Activated CD4-positive, alpha-beta T cell treated with anti-CD3 and anti-CD28 coated beads, Interleukin-2, amount 10 ng/mL, durations not matched to agents 24 days and 14 days (primary cell): ENCODE measurements at regions of chr3 and their contacts with region 1.

Region 1: DNA sequence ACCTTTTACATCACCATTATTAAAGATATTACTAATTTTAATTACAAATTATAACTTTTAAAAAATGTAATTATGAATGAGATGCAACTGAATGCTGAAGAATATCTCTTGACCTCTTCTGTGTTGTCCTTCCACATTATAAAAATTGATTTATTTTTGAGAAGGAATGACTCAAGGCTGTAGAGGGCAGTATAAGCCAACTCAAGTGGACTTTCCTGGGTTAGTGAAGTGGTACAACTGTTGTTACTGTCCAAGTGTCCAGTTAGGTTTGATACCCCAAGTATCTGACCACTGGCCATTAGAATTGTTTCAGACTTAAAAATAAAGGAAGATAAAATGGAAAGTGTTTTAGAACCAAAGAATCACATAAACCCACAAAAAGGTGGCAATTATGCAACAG is 51.9 kb downstream of the BBX start:
- DNase-seq: peak; percentile 65
- H3K4me3 Mint-ChIP-seq: no peak overlapping the region
- H3K27ac Mint-ChIP-seq: no peak overlapping the region
- H3K4me1 Mint-ChIP-seq: peaks cover 14% of the 10 kb centered on the region
- H3K27me3 Mint-ChIP-seq: no peaks in the 10 kb centered on the region

Region 2: DNA sequence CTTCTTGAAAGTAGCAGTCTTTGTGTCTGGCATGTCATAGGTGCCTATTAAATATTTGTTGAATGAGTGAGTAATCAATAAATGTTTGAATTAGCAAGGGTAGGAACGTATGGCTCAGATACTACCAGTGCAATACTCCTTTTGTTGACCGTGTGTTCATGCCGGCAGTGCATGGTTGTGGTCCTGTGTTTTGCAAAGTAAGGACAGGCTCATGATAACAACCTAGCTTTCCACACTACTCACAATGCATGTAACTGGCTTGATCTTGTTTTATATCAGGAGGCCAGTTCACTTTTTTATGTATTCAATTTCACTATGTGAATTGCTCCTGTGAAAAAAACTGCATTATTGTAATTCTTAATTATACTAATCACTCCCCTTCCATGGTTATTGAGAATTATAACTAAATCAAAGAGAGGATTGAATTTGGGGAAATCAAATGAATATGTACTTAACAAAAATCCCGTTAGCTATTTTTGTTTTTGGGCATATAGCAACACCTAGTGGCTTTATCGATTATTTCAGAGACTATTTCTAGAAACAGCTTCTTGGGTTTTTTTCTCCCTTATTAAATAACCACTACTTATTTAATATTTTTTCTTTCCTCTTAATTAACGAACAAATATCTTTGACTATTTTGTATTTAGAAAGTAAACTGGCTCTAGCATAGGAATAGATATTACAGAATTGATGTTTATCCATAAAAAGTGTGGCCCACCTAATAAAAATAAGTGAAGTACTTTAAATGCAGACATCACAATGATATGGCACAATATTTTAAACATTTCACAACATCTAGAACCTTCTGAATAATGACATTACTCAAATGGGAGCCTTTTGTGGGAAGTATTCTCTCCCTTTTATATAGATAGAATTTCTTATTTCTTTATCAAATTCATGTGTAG is 166.6 kb after region 1 on chr3:
- intact Hi-C with region 1: loop called (anchors 5 kb)
- DNase-seq: no peak
- H3K4me3 Mint-ChIP-seq: no peak overlapping the region
- H3K27ac Mint-ChIP-seq: no peak overlapping the region
- H3K4me1 Mint-ChIP-seq: no peaks in the 10 kb centered on the region
- H3K27me3 Mint-ChIP-seq: no peaks in the 10 kb centered on the region

Region 3: DNA sequence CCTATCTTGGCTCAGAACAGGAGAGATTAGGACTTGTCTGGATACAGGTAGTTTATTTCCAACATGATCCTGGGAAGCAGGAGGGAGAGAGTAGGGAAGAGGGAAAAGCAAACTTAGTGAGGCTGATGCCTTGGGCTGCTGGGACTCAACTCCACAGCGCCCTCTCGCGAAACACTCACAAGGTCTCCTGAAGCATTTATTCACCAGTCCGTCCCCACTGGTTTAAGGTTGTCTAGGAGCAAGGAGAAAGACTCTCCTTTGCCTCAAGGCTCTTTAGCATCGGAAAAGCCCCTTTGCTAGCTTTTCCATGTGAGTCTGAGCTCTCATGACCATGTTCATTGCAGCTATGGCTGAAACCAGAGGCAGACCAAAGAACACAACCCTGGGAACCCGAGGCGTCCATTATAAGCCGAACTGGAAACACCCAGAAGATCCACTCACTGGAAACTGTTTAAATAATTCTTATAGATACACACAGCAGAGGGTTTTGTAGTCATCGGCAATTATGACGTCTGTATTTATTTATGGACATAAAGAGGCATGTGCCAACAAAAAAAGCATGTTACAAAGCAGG is 271.7 kb after region 1 on chr3:
- intact Hi-C with region 1: loop called (anchors 10 kb)
- DNase-seq: peak; percentile 69
- H3K4me3 Mint-ChIP-seq: no peak overlapping the region
- H3K27ac Mint-ChIP-seq: no peak overlapping the region
- H3K4me1 Mint-ChIP-seq: no peaks in the 10 kb centered on the region
- H3K27me3 Mint-ChIP-seq: peaks cover 13% of the 10 kb centered on the region